ENCODE measurements at regions of chr7 and their contacts with region 1.

Region 1: DNA sequence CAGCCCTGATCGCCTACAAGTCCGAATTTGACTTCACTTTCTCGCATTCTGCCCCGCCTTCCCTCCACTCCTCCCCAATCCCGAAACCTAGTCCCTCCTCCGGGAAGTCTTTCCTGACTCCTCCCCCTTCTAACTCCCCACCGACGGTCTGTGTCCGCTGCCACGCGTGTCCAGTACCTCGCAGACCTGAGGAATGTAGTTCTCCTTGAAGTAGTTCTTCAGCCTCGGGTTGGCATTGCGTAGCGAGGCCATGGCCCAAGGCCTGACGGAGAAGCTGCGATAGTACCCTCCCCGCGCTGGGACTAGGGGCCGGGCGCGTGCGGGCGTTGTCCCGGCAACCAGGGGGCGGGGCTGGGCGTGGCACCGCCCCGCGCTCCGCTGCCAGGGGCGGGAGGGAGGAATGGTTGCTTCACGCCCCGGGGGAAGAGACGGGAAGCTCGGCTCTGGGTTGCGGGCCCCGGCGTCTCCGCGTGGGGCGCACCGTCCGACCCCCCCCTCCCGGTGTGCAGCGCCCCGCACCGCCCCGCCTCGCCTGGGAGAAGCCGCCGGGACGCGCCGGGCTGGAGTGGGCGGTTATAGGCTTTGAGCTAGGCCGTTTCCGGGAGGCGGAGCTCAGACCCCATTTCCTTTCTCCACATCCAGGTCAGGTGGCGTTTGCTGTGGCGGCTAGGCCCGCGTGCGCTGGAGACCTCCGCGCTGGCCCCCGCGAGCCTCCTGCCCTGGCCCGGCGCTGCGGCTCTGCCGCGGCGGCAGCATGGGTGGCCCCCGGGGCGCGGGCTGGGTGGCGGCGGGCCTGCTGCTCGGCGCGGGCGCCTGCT is at the starts of genes ARMC10 and FBXL13:
- DNase-seq: peak; percentile 81
- ATAC-seq: peak; percentile 85
- H3K4me3 ChIP-seq: peak within 1 kb of the TSS; percentile 76 to 86
- H3K27ac ChIP-seq: peak within 1 kb of the TSS; percentile 91
- H3K4me1 ChIP-seq: peaks cover 3 to 14% of the 10 kb centered on the region in 2 experiments; a peak in 2 of 4 replicates
- H3K27me3 ChIP-seq: no peaks in the 10 kb centered on the region
- CTCF ChIP-seq: no peak
- POLR2A ChIP-seq: peak; percentile 84
- RAD21 ChIP-seq: no peak
- total RNA-seq, gene ARMC10: 53.3 TPM
- total RNA-seq, gene FBXL13: 1.0 TPM

Region 2: DNA sequence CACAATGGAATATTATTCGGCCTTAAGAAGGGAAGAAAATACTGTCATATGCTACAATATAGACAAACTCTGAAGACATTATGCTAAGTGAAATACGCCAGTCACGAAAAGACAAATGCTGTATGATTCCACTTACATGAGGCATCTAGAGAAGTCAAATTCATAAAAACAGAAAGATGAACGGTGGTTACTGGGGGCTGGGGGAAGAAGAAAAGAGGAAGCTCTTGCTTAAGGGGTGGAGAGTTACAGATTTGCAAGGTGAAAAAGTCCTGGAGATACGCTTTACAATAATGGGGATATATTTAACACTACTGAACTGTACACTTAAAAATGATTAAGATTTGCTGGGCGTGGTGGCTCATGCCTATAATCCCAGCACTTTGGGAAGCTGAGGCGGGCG is 321.7 kb after region 1 on chr7:
- CTCF ChIA-PET with region 1: no interaction called
- POLR2A ChIA-PET with region 1: no interaction called
- RAD21 ChIA-PET with region 1: no interaction called
- intact Hi-C with region 1: loop called (anchors 10 kb)
- DNase-seq: no peak
- ATAC-seq: no peak
- H3K4me3 ChIP-seq: no peak overlapping the region
- H3K27ac ChIP-seq: no peak overlapping the region
- H3K4me1 ChIP-seq: no peaks in the 10 kb centered on the region
- H3K27me3 ChIP-seq: no peaks in the 10 kb centered on the region
- CTCF ChIP-seq: no peak
- POLR2A ChIP-seq: no peak
- RAD21 ChIP-seq: no peak